Caco-2 (cell line): ENCODE measurements at regions of chr11 and their contacts with region 1.

Region 1: GRCh38 chr11:85800595-85801342 is 10.2 kb downstream of the SYTL2 start:
- DNase-seq: no peak
- H3K4me3 ChIP-seq: no peak overlapping the region
- H3K4me3 Mint-ChIP-seq: no peak overlapping the region
- H3K27ac Mint-ChIP-seq: peak overlapping the region; percentile 85
- H3K4me1 ChIP-seq: peaks cover 66% of the 10 kb centered on the region
- H3K4me1 Mint-ChIP-seq: peaks cover 71% of the 10 kb centered on the region
- H3K27me3 ChIP-seq: no peaks in the 10 kb centered on the region
- H3K27me3 Mint-ChIP-seq: no peaks in the 10 kb centered on the region
- CTCF ChIP-seq: no peak

Region 2: GRCh38 chr11:85787809-85788805 is 12.7 kb before region 1 on chr11:
- CTCF ChIA-PET with region 1: interaction called, 3 read pairs
- POLR2A ChIA-PET with region 1: no interaction called
- intact Hi-C with region 1: loop called (anchors 1 kb)
- DNase-seq: peak; percentile 79 to 91
- H3K4me3 ChIP-seq: no peak overlapping the region
- H3K4me3 Mint-ChIP-seq: peak overlapping the region; percentile 61
- H3K27ac Mint-ChIP-seq: peak overlapping the region; percentile 86
- H3K4me1 ChIP-seq: peaks cover 69% of the 10 kb centered on the region
- H3K4me1 Mint-ChIP-seq: peaks cover 62% of the 10 kb centered on the region
- H3K27me3 ChIP-seq: no peaks in the 10 kb centered on the region
- H3K27me3 Mint-ChIP-seq: no peaks in the 10 kb centered on the region
- CTCF ChIP-seq: no peak